ENCODE measurements at regions of chr1 and their contacts with region 1.

Region 1: DNA sequence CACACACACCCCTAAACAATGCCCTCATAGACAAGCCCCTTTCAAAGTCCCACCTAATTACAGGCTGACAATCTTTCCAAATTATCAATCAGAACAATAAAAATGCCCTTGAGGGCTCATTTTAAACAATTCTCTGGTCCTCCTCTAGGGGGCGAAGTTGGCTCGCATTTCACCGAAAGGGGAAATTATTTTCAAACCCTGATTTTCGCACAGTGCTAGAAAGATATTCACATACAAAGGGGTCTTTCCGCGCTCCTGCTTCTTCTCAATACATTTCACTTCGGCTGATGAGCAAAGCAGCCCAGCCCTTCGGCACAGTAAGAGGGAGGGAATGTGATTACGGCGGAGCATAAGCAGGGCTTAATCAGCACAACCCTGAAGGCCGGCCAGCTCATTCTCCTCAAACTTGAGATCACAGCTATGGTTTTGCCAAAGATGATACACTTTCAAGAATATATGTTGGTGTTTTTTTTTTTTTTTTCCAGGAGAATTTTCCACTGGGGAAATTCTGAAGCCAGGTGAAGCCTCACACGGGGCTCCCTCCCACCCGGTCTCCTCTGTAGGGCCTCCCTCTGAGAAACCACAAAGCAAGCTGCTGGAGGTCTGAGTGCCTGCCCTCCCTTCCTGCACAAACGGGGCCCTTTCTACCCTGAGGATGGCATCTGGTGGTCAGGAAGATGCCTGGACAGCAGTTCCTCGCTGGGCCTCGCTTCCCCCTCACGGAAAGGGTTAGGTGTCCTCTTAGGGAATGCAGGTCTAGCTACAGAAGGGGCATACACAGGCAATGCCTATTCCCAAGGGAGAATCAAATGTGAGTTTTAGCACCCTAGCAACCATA is 66.9 kb downstream of the GNG12 start:
- DNase-seq: no peak
- ATAC-seq: peak; percentile 69
- H3K4me3 ChIP-seq: no peak overlapping the region
- H3K27ac ChIP-seq: no peak overlapping the region
- H3K4me1 ChIP-seq: peaks cover 7% of the 10 kb centered on the region
- H3K27me3 ChIP-seq: peaks cover 0 to 3% of the 10 kb centered on the region in 2 experiments; a peak in 2 of 4 replicates
- CTCF ChIP-seq: peak; percentile 65 to 76 (median 76)
- EP300 ChIP-seq: no peak
- POLR2A ChIP-seq: no peak
- RAD21 ChIP-seq: peak; percentile 85

Region 2: GRCh38 chr1:67446893-67447292 is 319.5 kb before region 1 on chr1:
- CTCF ChIA-PET with region 1: no interaction called
- POLR2A ChIA-PET with region 1: no interaction called
- RAD21 ChIA-PET with region 1: no interaction called
- SMC1A ChIA-PET with region 1: no interaction called
- in situ Hi-C with region 1: no loop called
- intact Hi-C with region 1: no loop called
- DNase-seq: no peak
- ATAC-seq: no peak; the same call in 2 of the 3 replicates
- H3K4me3 ChIP-seq: no peak overlapping the region
- H3K27ac ChIP-seq: no peak overlapping the region
- H3K4me1 ChIP-seq: no peaks in the 10 kb centered on the region
- H3K27me3 ChIP-seq: no peaks in the 10 kb centered on the region
- CTCF ChIP-seq: no peak
- EP300 ChIP-seq: no peak
- POLR2A ChIP-seq: no peak
- RAD21 ChIP-seq: no peak

Region 3: GRCh38 chr1:67561704-67562113 is 204.7 kb before region 1 on chr1:
- CTCF ChIA-PET with region 1: interaction called, 227 read pairs
- POLR2A ChIA-PET with region 1: no interaction called
- RAD21 ChIA-PET with region 1: interaction called, 86 read pairs
- SMC1A ChIA-PET with region 1: interaction called, 205 read pairs
- in situ Hi-C with region 1: loop called (anchors 5 kb)
- intact Hi-C with region 1: no loop called
- DNase-seq: peak; percentile 24
- ATAC-seq: peak; percentile 94
- H3K4me3 ChIP-seq: no peak overlapping the region
- H3K27ac ChIP-seq: no peak overlapping the region
- H3K4me1 ChIP-seq: no peaks in the 10 kb centered on the region; the same call in 1 of the 2 replicates
- H3K27me3 ChIP-seq: no peaks in the 10 kb centered on the region
- CTCF ChIP-seq: peak; percentile 82 to 88 (median 88)
- EP300 ChIP-seq: no peak
- POLR2A ChIP-seq: no peak
- RAD21 ChIP-seq: peak; percentile 93

Region 4: DNA sequence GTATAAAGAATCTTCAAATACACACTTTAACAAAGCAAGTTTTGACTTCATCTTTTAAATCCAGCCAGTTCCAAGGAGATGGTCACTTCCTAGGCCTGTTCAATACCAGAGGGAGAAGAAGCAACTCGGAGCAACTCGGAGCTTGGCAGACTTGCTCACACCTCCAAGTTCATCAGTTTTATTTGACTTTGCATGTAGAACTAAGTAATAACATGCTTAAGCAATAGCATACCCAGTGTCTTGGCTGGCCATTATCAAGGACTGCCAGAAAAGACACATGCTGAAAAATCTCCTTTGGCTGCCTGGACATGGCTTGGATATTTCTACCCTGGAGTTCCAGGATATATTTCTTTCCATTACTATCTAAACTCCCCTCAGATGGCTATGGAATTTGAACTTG is 14.3 kb after region 1 on chr1:
- CTCF ChIA-PET with region 1: interaction called, 36 read pairs
- POLR2A ChIA-PET with region 1: interaction called, 10 read pairs
- RAD21 ChIA-PET with region 1: interaction called, 55 read pairs
- SMC1A ChIA-PET with region 1: interaction called, 232 read pairs
- in situ Hi-C with region 1: no loop called
- intact Hi-C with region 1: no loop called
- DNase-seq: no peak
- ATAC-seq: no peak
- H3K4me3 ChIP-seq: no peak overlapping the region
- H3K27ac ChIP-seq: no peak overlapping the region
- H3K4me1 ChIP-seq: no peaks in the 10 kb centered on the region
- H3K27me3 ChIP-seq: no peaks in the 10 kb centered on the region
- CTCF ChIP-seq: no peak
- EP300 ChIP-seq: no peak
- POLR2A ChIP-seq: no peak
- RAD21 ChIP-seq: no peak

Region 5: DNA sequence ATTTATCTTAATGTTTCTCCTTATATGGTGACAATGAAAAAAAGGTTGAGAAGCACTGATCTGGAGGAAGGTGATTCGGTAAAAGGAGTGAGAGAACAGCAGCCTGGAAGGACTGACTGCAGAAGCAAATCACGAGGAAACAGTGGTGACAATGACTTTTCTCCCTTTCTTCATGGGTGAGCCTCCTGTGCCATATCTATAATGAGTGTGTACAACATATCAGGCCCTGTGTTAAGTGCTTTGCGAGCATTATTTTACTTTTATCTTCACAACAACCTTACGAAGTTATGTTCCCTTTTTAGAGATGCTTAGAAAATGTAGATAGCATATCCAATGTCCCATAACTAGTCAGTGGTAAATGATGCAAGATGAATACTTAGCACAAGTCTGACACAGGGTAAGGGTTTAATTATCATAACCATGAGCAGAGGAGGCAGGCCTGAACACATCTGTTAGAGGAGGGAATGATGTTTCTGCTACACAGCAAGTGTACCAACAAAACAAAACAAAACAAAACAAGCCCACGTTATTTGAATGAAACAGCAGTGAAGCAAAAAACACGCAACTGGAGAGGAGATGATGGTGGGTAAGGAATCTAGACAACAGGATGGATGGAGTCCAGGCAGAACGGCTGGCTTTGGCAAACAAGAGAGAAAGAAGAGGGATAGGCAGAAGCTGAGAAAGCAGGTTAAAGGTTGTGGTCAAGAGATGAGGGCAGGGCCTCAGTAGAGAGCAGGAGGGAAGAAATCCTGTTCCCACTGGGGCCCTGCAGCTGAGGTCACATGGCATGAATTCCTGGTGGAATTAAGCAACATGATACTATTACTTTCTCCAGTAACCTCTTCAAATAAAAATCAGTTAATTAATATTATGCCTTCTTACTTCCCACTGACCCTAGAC is 37.3 kb after region 1 on chr1:
- CTCF ChIA-PET with region 1: interaction called, 21 read pairs
- POLR2A ChIA-PET with region 1: interaction called, 9 read pairs
- RAD21 ChIA-PET with region 1: interaction called, 62 read pairs
- SMC1A ChIA-PET with region 1: interaction called, 57 read pairs
- in situ Hi-C with region 1: no loop called
- intact Hi-C with region 1: no loop called
- DNase-seq: no peak
- ATAC-seq: peak; percentile 19; the same call in 2 of the 3 replicates
- H3K4me3 ChIP-seq: no peak overlapping the region
- H3K27ac ChIP-seq: no peak overlapping the region
- H3K4me1 ChIP-seq: no peaks in the 10 kb centered on the region
- H3K27me3 ChIP-seq: no peaks in the 10 kb centered on the region; a peak in 1 of 4 replicates
- CTCF ChIP-seq: no peak
- EP300 ChIP-seq: no peak
- POLR2A ChIP-seq: no peak
- RAD21 ChIP-seq: no peak

Region 6: GRCh38 chr1:67838180-67838910 is 72.0 kb after region 1 on chr1:
- CTCF ChIA-PET with region 1: interaction called, 315 read pairs
- POLR2A ChIA-PET with region 1: interaction called, 36 read pairs
- RAD21 ChIA-PET with region 1: interaction called, 320 read pairs
- SMC1A ChIA-PET with region 1: interaction called, 1,058 read pairs
- in situ Hi-C with region 1: no loop called
- intact Hi-C with region 1: loop called (anchors 5 kb)
- DNase-seq: no peak
- ATAC-seq: peak; percentile 16; the same call in 1 of the 3 replicates
- H3K4me3 ChIP-seq: no peak overlapping the region
- H3K27ac ChIP-seq: no peak overlapping the region
- H3K4me1 ChIP-seq: no peaks in the 10 kb centered on the region
- H3K27me3 ChIP-seq: peaks cover 0 to 3% of the 10 kb centered on the region in 2 experiments; a peak in 2 of 4 replicates
- CTCF ChIP-seq: no peak
- EP300 ChIP-seq: no peak
- POLR2A ChIP-seq: no peak
- RAD21 ChIP-seq: no peak

Region 7: GRCh38 chr1:68057564-68057963 is 291.2 kb after region 1 on chr1:
- CTCF ChIA-PET with region 1: interaction called, 9 read pairs
- POLR2A ChIA-PET with region 1: no interaction called
- RAD21 ChIA-PET with region 1: interaction called, 8 read pairs
- SMC1A ChIA-PET with region 1: interaction called, 3 read pairs
- in situ Hi-C with region 1: no loop called
- intact Hi-C with region 1: loop called (anchors 5 kb)
- DNase-seq: no peak
- ATAC-seq: peak; percentile 74
- H3K4me3 ChIP-seq: no peak overlapping the region
- H3K27ac ChIP-seq: no peak overlapping the region
- H3K4me1 ChIP-seq: no peaks in the 10 kb centered on the region
- H3K27me3 ChIP-seq: no peaks in the 10 kb centered on the region
- CTCF ChIP-seq: no peak
- EP300 ChIP-seq: no peak
- POLR2A ChIP-seq: no peak
- RAD21 ChIP-seq: no peak

Region 8: GRCh38 chr1:68087184-68087583 is 320.8 kb after region 1 on chr1:
- CTCF ChIA-PET with region 1: no interaction called
- POLR2A ChIA-PET with region 1: no interaction called
- RAD21 ChIA-PET with region 1: no interaction called
- SMC1A ChIA-PET with region 1: no interaction called
- in situ Hi-C with region 1: no loop called
- intact Hi-C with region 1: no loop called
- DNase-seq: no peak
- ATAC-seq: no peak
- H3K4me3 ChIP-seq: no peak overlapping the region
- H3K27ac ChIP-seq: no peak overlapping the region
- H3K4me1 ChIP-seq: no peaks in the 10 kb centered on the region
- H3K27me3 ChIP-seq: no peaks in the 10 kb centered on the region
- CTCF ChIP-seq: no peak
- EP300 ChIP-seq: no peak
- POLR2A ChIP-seq: no peak
- RAD21 ChIP-seq: no peak

Region 9: DNA sequence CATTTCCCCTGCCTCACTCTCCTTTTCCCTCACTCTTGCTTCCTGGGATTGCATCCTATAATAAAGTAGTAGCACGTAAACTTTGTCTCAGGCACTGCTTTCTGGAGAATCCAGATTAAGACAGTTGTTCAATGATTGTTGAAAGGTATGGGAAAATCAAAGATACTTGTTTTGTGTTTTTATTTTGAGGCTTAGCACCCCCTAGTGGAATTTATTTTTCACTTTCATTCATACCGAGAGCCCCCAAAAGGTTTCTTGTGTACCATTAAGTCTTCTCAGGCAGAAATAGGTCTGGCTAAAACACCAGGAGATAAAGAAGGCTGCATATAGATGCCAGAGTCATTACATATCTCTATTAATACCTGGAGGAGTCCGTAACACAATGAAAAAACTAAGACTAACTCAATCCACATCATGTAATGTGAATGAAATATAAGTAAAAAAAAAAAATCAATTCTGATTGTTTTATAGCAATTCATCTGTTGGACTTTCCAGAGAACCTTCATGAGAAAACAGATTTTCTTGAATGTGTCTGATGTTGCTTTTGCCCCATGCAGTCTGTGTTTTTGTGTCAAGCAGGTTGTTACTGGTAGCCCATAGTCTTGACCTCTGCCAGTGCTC is 579.9 kb after region 1 on chr1:
- CTCF ChIA-PET with region 1: interaction called, 5 read pairs
- POLR2A ChIA-PET with region 1: no interaction called
- RAD21 ChIA-PET with region 1: interaction called, 5 read pairs
- SMC1A ChIA-PET with region 1: interaction called, 5 read pairs
- in situ Hi-C with region 1: no loop called
- intact Hi-C with region 1: loop called (anchors 5 kb)
- DNase-seq: no peak
- ATAC-seq: peak; percentile 56
- H3K4me3 ChIP-seq: no peak overlapping the region
- H3K27ac ChIP-seq: no peak overlapping the region
- H3K4me1 ChIP-seq: no peaks in the 10 kb centered on the region
- H3K27me3 ChIP-seq: no peaks in the 10 kb centered on the region
- CTCF ChIP-seq: peak; percentile 1 to 33 (median 24); a peak in 3 of 6 replicates
- EP300 ChIP-seq: no peak
- POLR2A ChIP-seq: no peak
- RAD21 ChIP-seq: peak; percentile 28; the same call in 1 of the 2 replicates

Measured in GM12878 (cell line).